HEK293T (cell line): ENCODE measurements at regions of chr11 and their contacts with region 1.

Region 1: DNA sequence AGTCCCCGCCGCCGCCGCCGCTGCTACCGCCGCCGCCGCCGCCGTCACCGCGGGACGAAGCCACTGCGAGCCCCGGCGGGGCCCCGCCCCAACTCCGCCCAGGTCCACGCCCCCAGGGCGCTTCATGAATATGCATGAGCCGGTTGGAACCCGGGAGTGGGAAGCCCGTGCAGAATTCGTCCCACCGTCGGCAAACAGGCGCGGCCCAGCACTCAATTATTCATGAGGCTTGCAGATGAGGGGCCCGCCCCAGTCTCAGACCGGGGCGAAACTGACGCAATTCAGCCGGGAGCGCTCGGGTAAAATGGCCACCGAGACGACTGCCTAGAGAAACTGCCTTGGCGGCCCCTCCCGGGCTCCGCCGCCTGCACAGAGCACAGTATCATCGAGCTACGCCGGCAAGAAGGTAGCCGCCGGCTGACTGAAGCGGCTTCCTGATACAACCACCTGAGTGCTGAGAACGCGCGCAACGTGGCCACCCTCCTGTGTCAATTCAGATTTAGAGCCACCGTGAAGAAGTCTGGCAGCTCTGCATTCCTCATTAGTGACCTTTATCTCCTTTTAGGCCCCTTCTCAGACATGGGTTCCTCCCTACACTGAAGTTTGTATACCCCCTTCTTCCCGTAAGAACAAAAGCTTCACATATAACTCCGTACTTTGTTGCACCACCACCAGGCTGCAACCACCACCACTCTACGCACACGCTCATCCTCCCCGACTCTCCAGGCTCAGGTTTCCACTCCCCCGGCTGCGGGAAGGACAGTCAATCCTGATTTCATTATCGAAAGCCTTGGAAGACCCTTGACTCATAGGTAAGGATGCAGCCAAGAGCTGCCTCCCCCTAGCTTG is at the start of gene TNKS1BP1:
- DNase-seq: peak; percentile 96

Region 2: DNA sequence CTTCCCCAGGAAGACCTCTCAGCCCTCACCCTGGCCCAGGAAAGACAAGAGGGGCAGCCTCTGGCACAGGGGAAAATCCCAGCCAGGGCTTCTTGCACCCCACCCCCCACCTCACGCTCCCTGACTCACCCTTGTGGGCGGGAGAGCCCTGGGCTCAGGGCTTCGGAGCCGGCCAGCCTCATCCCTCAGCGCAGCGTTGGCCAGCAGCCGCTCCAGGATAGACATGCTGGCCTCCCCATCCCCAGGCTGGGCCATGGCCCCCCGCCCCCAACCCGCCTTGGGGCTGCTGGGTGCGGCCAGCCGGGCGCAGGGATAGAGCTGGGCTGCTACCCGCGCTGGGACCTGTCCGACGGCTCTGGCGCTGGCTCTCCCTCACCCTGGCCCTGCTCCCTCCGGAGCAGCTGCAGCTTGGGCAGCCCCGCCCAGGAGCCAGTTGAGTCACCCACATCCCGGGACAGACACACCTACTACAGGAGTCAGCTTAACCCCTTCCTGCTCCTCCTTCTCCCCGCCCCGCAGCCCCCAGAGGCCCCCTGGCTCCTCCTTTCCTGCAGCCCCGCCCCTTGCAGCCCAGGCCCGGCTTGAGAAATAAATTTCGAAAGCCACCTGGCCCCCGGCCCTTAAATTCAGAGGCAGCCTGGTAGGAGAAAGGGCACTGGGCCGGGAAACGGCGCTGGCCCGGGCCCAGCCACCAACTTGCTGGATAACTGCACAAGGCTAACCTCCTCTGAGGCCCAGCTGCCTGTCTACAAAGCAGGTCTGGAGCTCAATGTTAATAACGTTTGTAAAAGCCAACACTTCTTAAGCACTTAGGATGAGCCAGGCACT is 13.8 kb before region 1 on chr11:
- CTCF ChIA-PET with region 1: no interaction called
- POLR2A ChIA-PET with region 1: interaction called, 16 read pairs
- DNase-seq: peak; percentile 31

Region 3: GRCh38 chr11:57335343-57336110 is 10.4 kb after region 1 on chr11 and contains the start of gene SSRP1:
- CTCF ChIA-PET with region 1: interaction called, 5 read pairs
- POLR2A ChIA-PET with region 1: interaction called, 121 read pairs
- DNase-seq: peak; percentile 89